H1 (cell line): ENCODE measurements at regions of chr3 and their contacts with region 1.

Region 1: GRCh38 chr3:37855363-37855970 is 6.2 kb upstream of the CTDSPL start:
- DNase-seq: peak in 1 of 2 experiments; percentile 96
- H3K4me3 ChIP-seq: no peak overlapping the region
- H3K27ac ChIP-seq: no peak overlapping the region
- H3K4me1 ChIP-seq: peaks cover 0 to 4% (median 2%) of the 10 kb centered on the region in 4 experiments; a peak in 4 of 7 replicates
- H3K27me3 ChIP-seq: peaks cover 0 to 10% (median 7%) of the 10 kb centered on the region in 4 experiments; a peak in 4 of 7 replicates
- CTCF ChIP-seq: peak; percentile 95 to 98 (median 97)
- EP300 ChIP-seq: no peak
- POLR2A ChIP-seq: no peak
- RAD21 ChIP-seq: peak; percentile 95 to 96

Region 2: GRCh38 chr3:37814547-37814946 is 40.9 kb before region 1 on chr3:
- CTCF ChIA-PET with region 1: interaction called, 35 read pairs
- POLR2A ChIA-PET with region 1: no interaction called
- DNase-seq: no peak
- H3K4me3 ChIP-seq: no peak overlapping the region
- H3K27ac ChIP-seq: no peak overlapping the region
- H3K4me1 ChIP-seq: no peaks in the 10 kb centered on the region
- H3K27me3 ChIP-seq: no peaks in the 10 kb centered on the region
- CTCF ChIP-seq: peak in 1 of 3 experiments; percentile 23; a peak in 2 of 4 replicates
- EP300 ChIP-seq: no peak
- POLR2A ChIP-seq: no peak
- RAD21 ChIP-seq: peak; percentile 38 to 45

Region 3: DNA sequence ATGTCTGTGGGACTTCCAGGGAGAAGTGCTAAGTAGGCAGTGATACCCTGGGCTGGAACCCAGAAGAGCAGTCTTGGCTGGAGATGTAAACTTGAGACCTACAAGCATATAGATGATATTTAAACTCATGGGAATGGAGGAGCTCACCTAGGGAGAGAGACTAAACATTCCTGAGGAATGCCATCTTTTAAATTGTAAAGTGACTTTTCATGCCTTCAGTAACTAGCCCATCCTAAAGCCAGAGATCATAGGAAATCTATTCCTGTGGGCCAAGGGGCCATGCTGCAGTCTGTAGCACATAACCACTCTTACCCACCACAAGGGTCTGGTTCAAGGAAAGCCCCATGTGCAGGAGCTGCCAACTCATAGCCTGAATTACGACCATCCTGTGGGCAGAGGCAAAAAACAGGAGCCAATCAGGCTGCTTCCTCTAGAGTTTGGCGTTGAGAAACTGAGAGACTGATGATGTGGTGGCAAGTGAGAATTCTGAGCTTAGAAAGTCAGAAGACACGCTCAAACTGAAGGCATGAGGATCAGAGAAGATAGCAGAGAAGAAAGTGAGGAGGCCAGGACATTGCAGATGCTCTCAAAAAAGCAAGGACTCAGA is 43.7 kb after region 1 on chr3:
- CTCF ChIA-PET with region 1: interaction called, 14 read pairs
- POLR2A ChIA-PET with region 1: no interaction called
- DNase-seq: no peak
- H3K4me3 ChIP-seq: peak overlapping the region in 1 of 4 experiments; percentile 2; a peak in 1 of 8 replicates
- H3K27ac ChIP-seq: 0 out of 2 replicates have a peak overlapping the region, but pooled peaks have one; percentile 2
- H3K4me1 ChIP-seq: peaks cover 3 to 14% (median 8%) of the 10 kb centered on the region in 4 experiments; a peak in 6 of 7 replicates
- H3K27me3 ChIP-seq: no peaks in the 10 kb centered on the region
- CTCF ChIP-seq: no peak
- EP300 ChIP-seq: no peak
- POLR2A ChIP-seq: no peak
- RAD21 ChIP-seq: no peak

Region 4: DNA sequence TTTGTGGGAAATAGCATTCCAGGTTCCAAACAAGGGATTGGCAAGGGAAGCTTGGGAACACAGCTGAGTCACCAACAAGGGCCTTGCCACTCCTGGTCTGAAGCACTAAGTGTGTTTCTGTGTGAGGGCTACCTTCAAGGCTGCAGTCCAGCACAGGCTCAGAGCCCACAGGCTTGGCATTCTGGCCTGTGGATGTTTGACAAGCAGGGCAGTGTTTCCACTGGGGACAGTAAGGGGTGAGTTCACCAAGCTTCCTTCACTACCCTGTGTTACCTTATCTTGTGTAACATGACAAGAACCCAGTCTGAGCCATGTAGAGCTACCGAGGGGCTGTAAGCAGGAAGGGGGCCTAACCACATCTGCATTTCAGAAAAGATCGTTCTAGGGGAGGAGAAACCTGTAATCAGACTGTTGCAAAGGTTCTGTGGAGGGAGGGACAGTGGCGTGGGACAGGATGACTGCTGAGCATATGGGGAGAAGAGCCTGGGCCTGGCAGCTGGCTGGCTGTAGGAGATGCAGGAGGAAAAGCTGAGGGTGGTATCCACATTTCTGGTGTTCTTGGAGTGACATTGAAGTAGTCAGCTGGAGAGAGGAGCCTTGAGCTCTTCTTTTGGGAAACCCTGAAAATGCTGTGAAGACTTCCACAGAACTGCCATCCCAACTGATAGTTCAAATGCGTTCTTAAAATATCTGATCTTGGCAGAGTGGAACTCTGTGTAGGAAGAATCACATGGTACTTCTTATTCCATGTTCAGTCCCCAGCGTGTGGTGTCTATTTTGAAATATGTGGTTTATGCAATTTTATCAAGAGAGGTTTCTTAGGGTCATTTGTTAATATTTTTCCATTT is 67.5 kb after region 1 on chr3:
- CTCF ChIA-PET with region 1: interaction called, 13 read pairs
- POLR2A ChIA-PET with region 1: no interaction called
- DNase-seq: peak in 1 of 2 experiments; percentile 41
- H3K4me3 ChIP-seq: no peak overlapping the region
- H3K27ac ChIP-seq: no peak overlapping the region
- H3K4me1 ChIP-seq: peaks cover 0 to 1% (median 0%) of the 10 kb centered on the region in 4 experiments; a peak in 1 of 7 replicates
- H3K27me3 ChIP-seq: no peaks in the 10 kb centered on the region
- CTCF ChIP-seq: no peak
- EP300 ChIP-seq: no peak
- POLR2A ChIP-seq: no peak
- RAD21 ChIP-seq: no peak

Region 5: DNA sequence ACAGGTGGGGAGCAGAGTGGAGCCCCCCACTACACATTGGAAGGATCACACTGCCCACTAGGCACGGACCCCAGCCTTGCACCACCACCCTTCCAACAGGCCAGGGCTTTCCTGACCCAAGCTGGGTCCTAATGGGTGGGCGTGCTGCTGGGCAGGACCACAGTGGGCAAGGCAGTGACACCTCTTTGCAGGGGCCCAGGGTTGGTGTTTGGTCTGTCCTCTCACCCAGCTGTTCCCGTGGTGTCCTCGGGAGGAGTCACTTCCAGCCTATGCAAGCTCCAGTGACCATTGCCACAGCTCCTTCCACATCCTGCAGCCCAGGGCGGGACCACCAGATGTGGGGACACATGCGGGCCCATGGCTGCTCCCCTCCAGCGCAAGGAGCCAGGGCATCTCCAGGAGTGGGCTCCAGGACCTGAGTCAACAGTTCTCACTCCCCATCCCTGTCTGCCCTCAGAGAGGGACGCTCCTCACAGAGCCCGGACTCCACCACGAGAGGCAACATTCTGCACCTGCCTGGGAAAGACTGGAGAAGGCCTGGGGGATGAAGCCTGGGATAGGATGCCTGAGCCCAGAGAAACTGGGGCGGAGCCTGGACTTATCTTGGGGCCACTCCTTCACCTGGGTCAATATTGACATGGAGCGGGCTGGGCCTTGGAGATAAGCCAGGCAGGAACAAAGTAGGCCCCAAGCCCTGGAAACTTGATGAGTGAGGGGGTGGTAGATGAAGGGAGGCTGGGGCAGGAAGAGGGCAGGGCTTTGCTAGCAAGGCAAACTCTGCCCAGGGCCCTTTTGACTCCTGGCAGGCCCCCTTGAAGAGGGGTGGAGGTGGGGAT is 131.2 kb after region 1 on chr3:
- CTCF ChIA-PET with region 1: interaction called, 52 read pairs
- POLR2A ChIA-PET with region 1: no interaction called
- DNase-seq: no peak
- H3K4me3 ChIP-seq: no peak overlapping the region
- H3K27ac ChIP-seq: no peak overlapping the region
- H3K4me1 ChIP-seq: peaks cover 0 to 9% (median 6%) of the 10 kb centered on the region in 4 experiments; a peak in 5 of 7 replicates
- H3K27me3 ChIP-seq: peaks cover 0 to 2% (median 0%) of the 10 kb centered on the region in 4 experiments; a peak in 2 of 7 replicates
- CTCF ChIP-seq: no peak
- EP300 ChIP-seq: no peak
- POLR2A ChIP-seq: no peak
- RAD21 ChIP-seq: no peak

Region 6: DNA sequence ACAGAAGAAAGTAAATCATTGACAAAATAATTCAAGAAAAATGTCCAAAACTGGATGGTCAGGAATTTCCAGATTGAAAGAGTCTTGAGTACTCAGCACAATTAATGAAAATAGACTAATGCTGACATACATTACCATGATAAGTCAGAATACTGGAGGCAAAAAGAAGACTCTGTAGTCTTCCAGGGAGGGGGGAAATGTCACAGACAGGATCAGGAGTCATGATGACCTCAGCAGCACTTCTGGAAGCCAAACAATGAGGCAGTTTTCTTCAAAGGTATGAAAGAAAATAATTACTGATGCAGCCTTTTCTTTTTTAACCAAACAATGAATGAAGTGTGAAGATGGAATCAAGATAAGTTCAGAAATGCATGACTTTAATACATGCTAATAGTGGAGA is 380.0 kb after region 1 on chr3:
- CTCF ChIA-PET with region 1: no interaction called
- POLR2A ChIA-PET with region 1: no interaction called
- DNase-seq: no peak
- H3K4me3 ChIP-seq: no peak overlapping the region
- H3K27ac ChIP-seq: no peak overlapping the region
- H3K4me1 ChIP-seq: no peaks in the 10 kb centered on the region
- H3K27me3 ChIP-seq: no peaks in the 10 kb centered on the region
- CTCF ChIP-seq: no peak
- EP300 ChIP-seq: no peak
- POLR2A ChIP-seq: no peak
- RAD21 ChIP-seq: no peak